Psoas muscle (tissue), 8 donors: ENCODE measurements at regions of chr16 and their contacts with region 1.

Region 1: GRCh38 chr16:76681296-76681695 is 404.1 kb downstream of the CNTNAP4 start:
- DNase-seq: no peak
- ATAC-seq: no peak
- H3K4me3 ChIP-seq: no peak overlapping the region
- H3K27ac ChIP-seq: no peak overlapping the region
- H3K4me1 ChIP-seq: no peaks in the 10 kb centered on the region
- H3K27me3 ChIP-seq: peaks cover 0 to 3% (median 0%) of the 10 kb centered on the region in 3 donors
- CTCF ChIP-seq: no peak

Region 2: GRCh38 chr16:76121636-76122035 is 559.7 kb before region 1 on chr16:
- intact Hi-C with region 1: loop called in 1 of 2 experiments (anchors 5 kb)
- DNase-seq: no peak
- ATAC-seq: no peak
- H3K4me3 ChIP-seq: no peak overlapping the region
- H3K27ac ChIP-seq: no peak overlapping the region
- H3K4me1 ChIP-seq: no peaks in the 10 kb centered on the region
- H3K27me3 ChIP-seq: no peaks in the 10 kb centered on the region
- CTCF ChIP-seq: no peak